H1 (cell line): ENCODE measurements at regions of chr12 and their contacts with region 1.

Region 1: DNA sequence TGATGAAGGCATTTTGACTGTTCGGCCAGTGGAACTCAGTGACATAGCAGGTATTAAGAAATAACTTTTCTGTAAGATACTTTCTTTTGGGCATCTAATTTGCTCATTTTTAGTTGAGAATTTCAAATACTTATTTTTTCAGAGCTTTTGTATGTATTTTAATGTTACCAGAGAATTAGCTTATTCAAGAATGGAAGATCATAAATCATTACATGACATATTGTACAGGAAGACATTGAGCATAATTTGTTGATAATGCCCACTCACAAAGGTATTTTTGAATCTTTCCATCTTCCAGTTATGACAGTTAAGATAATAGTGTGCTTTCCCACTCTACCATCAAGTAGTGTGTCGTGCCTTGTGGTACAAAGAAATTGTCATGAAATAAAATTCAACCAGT is 36.5 kb downstream of the TMEM117 start:
- DNase-seq: no peak
- H3K4me3 ChIP-seq: no peak overlapping the region
- H3K27ac ChIP-seq: no peak overlapping the region
- H3K4me1 ChIP-seq: no peaks in the 10 kb centered on the region
- H3K27me3 ChIP-seq: no peaks in the 10 kb centered on the region
- CTCF ChIP-seq: no peak
- EP300 ChIP-seq: no peak
- POLR2A ChIP-seq: no peak
- RAD21 ChIP-seq: no peak

Region 2: GRCh38 chr12:43882578-43883178 is 10.3 kb after region 1 on chr12:
- CTCF ChIA-PET with region 1: interaction called, 17 read pairs
- POLR2A ChIA-PET with region 1: no interaction called
- DNase-seq: no peak
- H3K4me3 ChIP-seq: no peak overlapping the region
- H3K27ac ChIP-seq: no peak overlapping the region
- H3K4me1 ChIP-seq: no peaks in the 10 kb centered on the region
- H3K27me3 ChIP-seq: no peaks in the 10 kb centered on the region
- CTCF ChIP-seq: peak in 2 of 3 experiments; percentile 71 to 78; a peak in 3 of 4 replicates
- EP300 ChIP-seq: no peak
- POLR2A ChIP-seq: no peak
- RAD21 ChIP-seq: peak; percentile 95 to 96

Region 3: GRCh38 chr12:43896498-43896897 is 24.1 kb after region 1 on chr12:
- CTCF ChIA-PET with region 1: no interaction called
- POLR2A ChIA-PET with region 1: no interaction called
- DNase-seq: no peak
- H3K4me3 ChIP-seq: no peak overlapping the region
- H3K27ac ChIP-seq: no peak overlapping the region
- H3K4me1 ChIP-seq: no peaks in the 10 kb centered on the region; a peak in 1 of 7 replicates
- H3K27me3 ChIP-seq: no peaks in the 10 kb centered on the region
- CTCF ChIP-seq: no peak
- EP300 ChIP-seq: no peak
- POLR2A ChIP-seq: no peak
- RAD21 ChIP-seq: no peak

Region 4: GRCh38 chr12:43945983-43946382 is 73.6 kb after region 1 on chr12:
- CTCF ChIA-PET with region 1: no interaction called
- POLR2A ChIA-PET with region 1: no interaction called
- DNase-seq: no peak
- H3K4me3 ChIP-seq: no peak overlapping the region
- H3K27ac ChIP-seq: no peak overlapping the region
- H3K4me1 ChIP-seq: no peaks in the 10 kb centered on the region
- H3K27me3 ChIP-seq: no peaks in the 10 kb centered on the region
- CTCF ChIP-seq: no peak
- EP300 ChIP-seq: no peak
- POLR2A ChIP-seq: no peak
- RAD21 ChIP-seq: no peak